ENCODE measurements at regions of chr3 and their contacts with region 1.

Region 1: GRCh38 chr3:190566043-190566933 is 52.4 kb downstream of the IL1RAP start:
- DNase-seq: peak; percentile 90
- H3K4me3 Mint-ChIP-seq: peak overlapping the region; percentile 41
- H3K27ac Mint-ChIP-seq: peak overlapping the region; percentile 94
- H3K4me1 Mint-ChIP-seq: peaks cover 69% of the 10 kb centered on the region
- H3K27me3 Mint-ChIP-seq: no peaks in the 10 kb centered on the region

Region 2: DNA sequence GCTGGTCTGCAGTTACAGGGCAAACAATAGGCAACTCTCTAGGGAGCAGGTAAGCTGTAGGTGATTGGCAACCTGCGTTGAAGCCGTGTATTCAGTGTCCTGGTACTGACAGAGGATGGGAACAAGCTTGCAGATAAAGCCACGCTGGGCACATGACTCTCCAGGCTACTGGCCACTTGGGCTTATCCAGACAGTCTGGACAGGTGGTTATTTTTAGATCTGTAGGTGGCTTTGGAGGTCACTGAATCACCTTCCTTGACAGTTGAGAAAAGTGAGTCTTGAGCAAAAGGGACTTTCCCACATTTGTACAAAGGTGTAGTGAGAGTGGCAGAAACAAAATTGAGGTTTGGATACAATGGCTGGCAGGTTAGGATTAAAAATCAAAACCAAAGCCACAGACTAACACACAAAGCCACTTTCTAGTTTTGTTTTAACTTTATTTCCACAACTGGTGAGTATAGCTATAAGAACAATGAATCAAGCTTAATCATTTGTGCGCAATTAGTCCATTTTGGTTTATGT is 74.7 kb before region 1 on chr3:
- intact Hi-C with region 1: loop called (anchors 1 kb)
- DNase-seq: no peak
- H3K4me3 Mint-ChIP-seq: peak overlapping the region; percentile 11
- H3K27ac Mint-ChIP-seq: peak overlapping the region; percentile 12
- H3K4me1 Mint-ChIP-seq: peaks cover 22% of the 10 kb centered on the region
- H3K27me3 Mint-ChIP-seq: peaks cover 69% of the 10 kb centered on the region

Region 3: DNA sequence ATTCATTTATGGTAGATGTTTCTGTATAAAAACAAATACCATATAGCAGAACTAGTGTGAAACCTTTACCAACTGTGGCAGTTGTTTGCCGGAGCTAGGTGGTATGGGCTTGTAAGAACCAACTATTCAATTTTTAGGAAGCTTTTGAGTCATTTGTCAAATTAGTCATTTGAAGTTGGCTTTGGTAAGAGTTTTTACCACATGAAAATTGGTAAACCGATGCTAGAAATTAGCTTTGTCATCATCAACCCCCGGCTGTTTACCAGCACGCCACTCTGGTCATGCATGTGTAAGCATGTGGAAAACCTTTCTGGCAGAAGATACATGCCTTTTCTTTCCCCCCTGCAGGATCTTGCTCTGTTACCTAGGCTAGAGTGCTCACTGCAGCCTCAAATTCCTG is 10.9 kb after region 1 on chr3:
- intact Hi-C with region 1: loop called (anchors 1 kb)
- DNase-seq: no peak
- H3K4me3 Mint-ChIP-seq: no peak overlapping the region
- H3K27ac Mint-ChIP-seq: peak overlapping the region; percentile 44
- H3K4me1 Mint-ChIP-seq: peaks cover 43% of the 10 kb centered on the region
- H3K27me3 Mint-ChIP-seq: no peaks in the 10 kb centered on the region

Region 4: DNA sequence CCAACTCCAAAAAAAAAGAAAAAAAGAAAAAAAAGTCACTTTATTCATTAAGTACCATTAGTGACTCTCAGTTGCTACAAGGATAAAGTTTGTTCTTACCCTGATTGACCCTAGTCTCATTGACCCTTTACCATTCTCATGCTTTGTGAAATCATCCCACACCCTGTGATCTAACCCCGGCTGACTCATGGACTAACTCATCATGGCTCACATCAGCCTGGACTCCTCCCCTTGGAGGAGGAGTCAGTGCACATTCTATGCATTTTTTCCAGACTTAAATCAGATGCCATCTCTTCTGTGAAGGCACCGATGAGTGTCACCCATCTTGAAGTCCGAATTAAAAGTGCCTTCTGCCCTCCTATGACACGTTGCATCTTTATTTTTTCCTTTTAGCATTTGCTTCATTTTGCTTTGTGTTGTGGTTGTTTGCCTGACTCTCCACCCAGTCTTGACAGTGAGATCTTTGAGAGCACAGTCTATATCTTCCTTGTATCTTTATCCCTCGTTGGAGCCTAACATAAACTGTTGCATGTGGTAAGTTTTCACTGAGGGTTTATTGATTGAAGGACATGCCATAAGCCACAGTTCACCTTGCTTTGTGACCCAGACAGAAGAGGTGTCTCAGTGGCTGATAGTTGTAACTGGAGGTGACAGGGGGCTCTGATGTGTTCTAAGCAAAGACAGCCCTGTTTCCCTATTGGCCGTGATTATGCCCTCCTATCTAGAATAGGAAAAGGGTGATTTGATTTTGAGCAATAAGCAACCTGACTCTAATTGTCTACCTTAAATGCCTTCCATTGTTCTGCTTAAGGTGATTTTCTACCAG is 19.7 kb after region 1 on chr3:
- intact Hi-C with region 1: loop called (anchors 1 kb)
- DNase-seq: peak; percentile 85
- H3K4me3 Mint-ChIP-seq: peak overlapping the region; percentile 65
- H3K27ac Mint-ChIP-seq: peak overlapping the region; percentile 94
- H3K4me1 Mint-ChIP-seq: peaks cover 45% of the 10 kb centered on the region
- H3K27me3 Mint-ChIP-seq: no peaks in the 10 kb centered on the region

Region 5: DNA sequence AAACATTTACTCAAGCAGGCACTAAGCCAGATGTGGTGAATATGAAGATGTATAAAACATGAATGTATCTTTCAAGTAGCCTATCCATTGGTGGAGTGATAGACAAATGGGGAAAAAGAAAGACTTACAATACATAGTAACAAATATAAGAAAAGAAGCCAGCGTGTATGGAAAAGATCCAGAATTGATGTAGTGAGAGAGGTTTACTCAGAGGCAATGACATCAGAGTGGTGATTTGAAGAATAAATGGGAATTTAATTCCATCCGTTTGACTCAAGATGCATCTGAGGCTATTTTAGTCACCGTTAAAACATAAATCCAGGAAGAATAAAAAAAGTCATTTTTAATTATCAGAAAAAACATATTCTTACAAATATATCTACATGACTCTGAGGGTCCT is 110.2 kb after region 1 on chr3:
- intact Hi-C with region 1: no loop called
- DNase-seq: no peak
- H3K4me3 Mint-ChIP-seq: no peak overlapping the region
- H3K27ac Mint-ChIP-seq: no peak overlapping the region
- H3K4me1 Mint-ChIP-seq: peaks cover 1% of the 10 kb centered on the region
- H3K27me3 Mint-ChIP-seq: peaks cover 6% of the 10 kb centered on the region

Region 6: GRCh38 chr3:191141728-191142127 is 575.4 kb after region 1 on chr3:
- intact Hi-C with region 1: no loop called
- DNase-seq: no peak
- H3K4me3 Mint-ChIP-seq: no peak overlapping the region
- H3K27ac Mint-ChIP-seq: no peak overlapping the region
- H3K4me1 Mint-ChIP-seq: no peaks in the 10 kb centered on the region
- H3K27me3 Mint-ChIP-seq: no peaks in the 10 kb centered on the region

Measured in activated CD4-positive, alpha-beta T cell treated with anti-CD3 and anti-CD28 coated beads, Interleukin-2, amount 10 ng/mL, durations not matched to agents 24 days and 14 days (primary cell).